ENCODE measurements at regions of chr6 and their contacts with region 1.

Region 1: GRCh38 chr6:43395776-43396175 is 26.3 kb upstream of the ZNF318 start:
- DNase-seq: no peak
- ATAC-seq: no peak
- H3K4me3 ChIP-seq: no peak overlapping the region
- H3K4me3 Mint-ChIP-seq: no peak overlapping the region
- H3K27ac ChIP-seq: no peak overlapping the region
- H3K27ac Mint-ChIP-seq: peak overlapping the region; percentile 57
- H3K4me1 ChIP-seq: peaks cover 19% of the 10 kb centered on the region
- H3K4me1 Mint-ChIP-seq: peaks cover 36% of the 10 kb centered on the region
- H3K27me3 ChIP-seq: peaks cover 0 to 3% of the 10 kb centered on the region in 2 experiments
- H3K27me3 Mint-ChIP-seq: peaks cover 2% of the 10 kb centered on the region
- CTCF ChIP-seq: no peak

Region 2: DNA sequence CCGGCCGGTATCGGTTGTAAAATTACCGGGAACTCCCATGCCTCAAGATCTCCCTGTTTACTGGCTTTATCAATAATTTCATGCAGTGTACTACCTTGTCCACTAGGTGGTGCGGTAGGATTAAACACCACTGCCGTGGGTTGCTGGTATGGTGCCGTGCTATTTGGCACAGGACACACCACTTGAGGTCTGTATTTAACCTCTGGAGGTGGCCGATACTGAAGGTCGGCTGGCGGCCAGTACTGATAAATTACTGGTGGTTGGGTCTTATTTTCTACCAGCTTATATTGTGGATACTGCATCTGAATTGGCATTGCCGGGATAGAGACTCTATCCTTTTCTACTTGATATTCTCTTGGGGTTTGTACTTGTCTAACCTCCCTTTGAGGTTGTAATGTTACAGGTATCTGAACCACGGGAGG is 494.2 kb before region 1 on chr6:
- CTCF ChIA-PET with region 1: interaction called, 3 read pairs
- POLR2A ChIA-PET with region 1: no interaction called
- intact Hi-C with region 1: loop called in 1 of 2 experiments (anchors 5 kb)
- DNase-seq: peak; percentile 32 to 89 (median 67)
- ATAC-seq: peak; percentile 100
- H3K4me3 ChIP-seq: no peak overlapping the region
- H3K4me3 Mint-ChIP-seq: peak overlapping the region; percentile 63
- H3K27ac ChIP-seq: no peak overlapping the region
- H3K27ac Mint-ChIP-seq: no peak overlapping the region
- H3K4me1 ChIP-seq: peaks cover 6% of the 10 kb centered on the region
- H3K4me1 Mint-ChIP-seq: peaks cover 17% of the 10 kb centered on the region
- H3K27me3 ChIP-seq: no peaks in the 10 kb centered on the region
- H3K27me3 Mint-ChIP-seq: no peaks in the 10 kb centered on the region
- CTCF ChIP-seq: peak; percentile 92

Region 3: DNA sequence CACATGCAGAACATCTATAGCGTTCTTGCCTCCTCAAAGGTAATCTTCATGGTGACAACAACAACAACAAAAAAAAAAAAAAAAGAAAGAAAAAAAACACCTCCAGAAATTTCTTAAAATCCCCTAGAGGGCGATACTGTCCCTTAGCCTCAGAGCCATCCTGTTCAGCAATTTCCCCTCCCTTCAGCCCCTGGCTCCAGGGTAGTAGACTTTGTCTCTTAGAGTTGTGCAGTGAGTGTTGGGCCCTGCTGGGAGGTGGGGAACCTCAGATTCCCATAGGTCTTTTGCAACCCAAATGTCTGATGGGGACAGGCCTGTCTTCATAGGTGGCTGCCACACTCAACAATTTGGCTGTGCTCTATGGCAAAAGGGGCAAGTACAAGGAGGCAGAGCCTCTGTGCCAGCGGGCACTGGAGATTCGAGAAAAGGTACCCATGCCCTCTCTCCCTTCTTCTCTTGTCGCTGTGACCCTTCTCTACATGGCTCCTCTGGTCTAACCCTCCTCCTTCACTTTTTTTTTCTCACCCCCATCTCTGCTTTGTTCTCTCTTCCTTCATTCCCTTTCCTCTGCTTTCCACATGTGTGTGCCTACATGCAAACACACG is 325.6 kb before region 1 on chr6:
- CTCF ChIA-PET with region 1: no interaction called
- POLR2A ChIA-PET with region 1: no interaction called
- intact Hi-C with region 1: no loop called
- DNase-seq: peak in 2 of 9 experiments; percentile 55 to 72
- ATAC-seq: peak; percentile 78
- H3K4me3 ChIP-seq: no peak overlapping the region
- H3K4me3 Mint-ChIP-seq: no peak overlapping the region
- H3K27ac ChIP-seq: no peak overlapping the region
- H3K27ac Mint-ChIP-seq: no peak overlapping the region
- H3K4me1 ChIP-seq: no peaks in the 10 kb centered on the region
- H3K4me1 Mint-ChIP-seq: peaks cover 2% of the 10 kb centered on the region
- H3K27me3 ChIP-seq: no peaks in the 10 kb centered on the region
- H3K27me3 Mint-ChIP-seq: no peaks in the 10 kb centered on the region
- CTCF ChIP-seq: peak; percentile 62

Region 4: GRCh38 chr6:43228951-43229802 is 166.6 kb before region 1 on chr6 and contains the start of gene DNPH1:
- CTCF ChIA-PET with region 1: interaction called, 16 read pairs
- POLR2A ChIA-PET with region 1: no interaction called
- intact Hi-C with region 1: no loop called
- DNase-seq: peak; percentile 62 to 90 (median 79)
- ATAC-seq: peak; percentile 62
- H3K4me3 ChIP-seq: peak within 1 kb of the TSS; percentile 48 to 69
- H3K4me3 Mint-ChIP-seq: peak within 1 kb of the TSS; percentile 87
- H3K27ac ChIP-seq: peak within 1 kb of the TSS; percentile 49 to 60
- H3K27ac Mint-ChIP-seq: peak within 1 kb of the TSS; percentile 94
- H3K4me1 ChIP-seq: peaks cover 43% of the 10 kb centered on the region
- H3K4me1 Mint-ChIP-seq: peaks cover 40% of the 10 kb centered on the region
- H3K27me3 ChIP-seq: no peaks in the 10 kb centered on the region
- H3K27me3 Mint-ChIP-seq: no peaks in the 10 kb centered on the region
- CTCF ChIP-seq: peak; percentile 92
- total RNA-seq, gene DNPH1: 19.6 to 26.8 TPM

Region 5: DNA sequence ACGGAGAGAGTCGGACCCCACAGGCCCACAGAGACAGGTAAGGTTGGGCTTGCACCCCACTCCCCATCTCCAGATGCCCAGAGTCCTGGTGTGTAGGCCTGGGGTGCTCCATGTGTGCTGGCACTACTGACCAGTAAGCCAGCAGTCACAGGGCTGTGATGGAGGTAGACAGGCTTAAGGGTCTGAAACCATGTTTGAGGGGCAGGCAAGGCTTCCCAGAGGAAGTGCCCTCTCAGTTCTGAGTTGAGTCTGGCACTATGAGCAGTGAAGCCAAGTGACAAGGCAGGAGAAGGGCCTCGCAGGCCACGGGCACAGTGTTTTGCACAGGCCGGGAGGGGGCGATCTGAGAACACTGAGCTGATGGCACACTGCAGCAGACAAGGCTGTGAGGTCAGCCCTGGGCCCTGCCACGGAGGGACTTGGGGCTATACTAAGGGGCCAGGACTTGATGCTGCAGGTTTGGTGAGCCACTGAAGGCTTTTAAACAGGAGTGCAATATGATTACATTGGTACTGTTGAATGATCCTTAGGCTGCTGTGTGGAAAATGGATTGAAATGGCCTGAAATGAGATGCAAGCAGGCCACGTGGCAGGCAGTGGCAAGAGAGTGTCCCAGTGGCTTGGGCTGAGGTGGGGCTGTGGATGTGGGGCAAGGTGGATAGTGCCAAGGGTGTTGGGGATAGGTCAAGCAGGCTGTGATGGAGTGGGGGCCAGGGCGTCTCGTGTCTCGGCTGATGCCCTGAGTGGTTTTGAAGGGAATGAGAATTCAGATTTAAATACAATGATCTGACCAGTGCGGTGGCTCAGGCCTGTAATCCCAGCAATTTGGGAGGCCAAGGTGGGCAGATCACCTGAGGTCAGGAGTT is 132.2 kb before region 1 on chr6:
- CTCF ChIA-PET with region 1: interaction called, 52 read pairs
- POLR2A ChIA-PET with region 1: no interaction called
- intact Hi-C with region 1: loop called in 1 of 2 experiments (anchors 1 kb)
- DNase-seq: peak; percentile 57 to 84 (median 75)
- ATAC-seq: peak; percentile 95
- H3K4me3 ChIP-seq: no peak overlapping the region
- H3K4me3 Mint-ChIP-seq: no peak overlapping the region
- H3K27ac ChIP-seq: no peak overlapping the region
- H3K27ac Mint-ChIP-seq: no peak overlapping the region
- H3K4me1 ChIP-seq: no peaks in the 10 kb centered on the region
- H3K4me1 Mint-ChIP-seq: no peaks in the 10 kb centered on the region
- H3K27me3 ChIP-seq: no peaks in the 10 kb centered on the region
- H3K27me3 Mint-ChIP-seq: peaks cover 3% of the 10 kb centered on the region
- CTCF ChIP-seq: peak; percentile 57

Region 6: DNA sequence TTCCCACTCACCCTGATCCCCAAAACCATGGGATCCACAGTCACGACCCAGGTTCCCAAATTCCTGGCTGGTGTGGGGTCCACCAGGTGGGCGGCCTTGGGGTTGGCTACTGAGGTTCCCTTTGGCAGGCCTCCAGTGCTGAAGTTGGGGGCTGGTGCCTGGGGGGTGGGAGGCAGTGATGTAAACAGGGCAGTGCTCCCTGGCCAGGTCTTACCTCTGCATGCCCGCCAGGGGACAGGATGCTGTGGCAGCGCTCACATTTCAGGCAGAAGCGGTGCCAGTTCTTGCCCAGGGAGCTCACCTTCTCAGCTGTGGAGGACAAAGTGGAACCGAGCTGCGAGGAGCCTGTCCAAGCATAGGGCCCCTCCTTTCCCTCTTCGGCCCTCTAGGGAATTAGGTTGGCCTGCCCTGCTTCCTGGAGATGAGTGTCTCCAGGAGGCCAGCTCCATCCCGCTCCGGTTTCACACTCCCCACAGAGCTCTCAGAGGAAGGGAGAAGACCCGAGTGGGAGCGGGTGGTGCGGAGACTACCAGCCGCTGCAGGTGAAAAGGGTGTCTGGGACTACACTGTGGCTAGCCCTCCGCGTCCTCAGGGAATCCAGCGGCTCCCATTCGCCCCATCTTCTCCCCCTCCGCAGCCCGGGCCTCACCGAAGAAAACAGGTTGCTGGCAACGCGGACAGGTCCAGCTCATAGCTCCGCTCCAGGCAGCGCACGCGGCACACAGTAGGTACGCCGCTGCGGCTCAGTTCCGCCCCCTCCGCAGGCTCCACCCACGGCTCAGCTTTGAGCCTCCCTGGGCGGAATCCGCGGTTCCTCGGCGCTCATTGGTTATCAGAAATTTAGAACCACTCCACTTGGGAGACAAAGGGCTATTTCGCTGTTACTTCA is 87.4 kb before region 1 on chr6 and contains the start of gene CRIP3:
- CTCF ChIA-PET with region 1: interaction called, 24 read pairs
- POLR2A ChIA-PET with region 1: interaction called, 3 read pairs
- intact Hi-C with region 1: loop called (anchors 1 kb)
- DNase-seq: peak in 8 of 9 experiments; percentile 21 to 68 (median 50)
- ATAC-seq: peak; percentile 86
- H3K4me3 ChIP-seq: peak within 1 kb of the TSS; percentile 36 to 48
- H3K4me3 Mint-ChIP-seq: peak within 1 kb of the TSS; percentile 77
- H3K27ac ChIP-seq: no peak within 1 kb of the TSS
- H3K27ac Mint-ChIP-seq: no peak within 1 kb of the TSS
- H3K4me1 ChIP-seq: peaks cover 12% of the 10 kb centered on the region
- H3K4me1 Mint-ChIP-seq: peaks cover 9% of the 10 kb centered on the region
- H3K27me3 ChIP-seq: no peaks in the 10 kb centered on the region
- H3K27me3 Mint-ChIP-seq: peaks cover 5% of the 10 kb centered on the region
- CTCF ChIP-seq: peak; percentile 41
- total RNA-seq, gene CRIP3: 0.64 to 0.84 TPM

Region 7: GRCh38 chr6:43355862-43356590 is 39.8 kb before region 1 on chr6:
- CTCF ChIA-PET with region 1: interaction called, 47 read pairs
- POLR2A ChIA-PET with region 1: no interaction called
- intact Hi-C with region 1: loop called (anchors 1 to 2 kb)
- DNase-seq: no peak
- ATAC-seq: peak; percentile 34
- H3K4me3 ChIP-seq: no peak overlapping the region
- H3K4me3 Mint-ChIP-seq: no peak overlapping the region
- H3K27ac ChIP-seq: no peak overlapping the region
- H3K27ac Mint-ChIP-seq: no peak overlapping the region
- H3K4me1 ChIP-seq: no peaks in the 10 kb centered on the region
- H3K4me1 Mint-ChIP-seq: peaks cover 3% of the 10 kb centered on the region
- H3K27me3 ChIP-seq: no peaks in the 10 kb centered on the region
- H3K27me3 Mint-ChIP-seq: no peaks in the 10 kb centered on the region
- CTCF ChIP-seq: no peak

Region 8: DNA sequence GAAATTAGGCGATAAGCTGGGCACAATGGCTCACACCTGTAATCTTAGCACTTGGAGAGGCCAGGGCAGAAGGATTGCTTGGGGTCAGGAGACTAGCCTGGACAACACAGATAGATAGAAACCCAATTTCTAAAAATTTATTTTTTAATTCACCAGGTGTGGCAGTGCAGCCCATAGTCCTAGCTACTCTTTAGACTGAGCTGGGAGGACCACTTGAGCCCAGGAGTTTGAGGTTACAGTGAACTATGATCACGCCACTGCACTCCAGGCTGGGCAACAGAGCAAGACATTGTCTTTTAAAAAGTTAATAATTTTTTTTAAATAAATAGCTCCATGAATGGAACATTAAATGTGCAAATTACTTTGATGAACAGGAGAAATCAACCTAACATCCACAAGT is 34.5 kb before region 1 on chr6:
- CTCF ChIA-PET with region 1: interaction called, 47 read pairs
- POLR2A ChIA-PET with region 1: no interaction called
- intact Hi-C with region 1: loop called (anchors 1 to 2 kb)
- DNase-seq: peak in 1 of 9 experiments; percentile 30
- ATAC-seq: peak; percentile 48
- H3K4me3 ChIP-seq: no peak overlapping the region
- H3K4me3 Mint-ChIP-seq: no peak overlapping the region
- H3K27ac ChIP-seq: no peak overlapping the region
- H3K27ac Mint-ChIP-seq: no peak overlapping the region
- H3K4me1 ChIP-seq: peaks cover 3% of the 10 kb centered on the region
- H3K4me1 Mint-ChIP-seq: peaks cover 30% of the 10 kb centered on the region
- H3K27me3 ChIP-seq: no peaks in the 10 kb centered on the region
- H3K27me3 Mint-ChIP-seq: no peaks in the 10 kb centered on the region
- CTCF ChIP-seq: no peak

Region 9: GRCh38 chr6:43629505-43630300 is 233.9 kb after region 1 on chr6:
- CTCF ChIA-PET with region 1: no interaction called
- POLR2A ChIA-PET with region 1: no interaction called
- intact Hi-C with region 1: no loop called
- DNase-seq: peak; percentile 66 to 96 (median 84)
- ATAC-seq: peak; percentile 51
- H3K4me3 ChIP-seq: peak overlapping the region; percentile 77 to 82
- H3K4me3 Mint-ChIP-seq: peak overlapping the region; percentile 98
- H3K27ac ChIP-seq: peak overlapping the region; percentile 53 to 75
- H3K27ac Mint-ChIP-seq: peak overlapping the region; percentile 95
- H3K4me1 ChIP-seq: peaks cover 15% of the 10 kb centered on the region
- H3K4me1 Mint-ChIP-seq: peaks cover 39% of the 10 kb centered on the region
- H3K27me3 ChIP-seq: no peaks in the 10 kb centered on the region
- H3K27me3 Mint-ChIP-seq: no peaks in the 10 kb centered on the region
- CTCF ChIP-seq: no peak

Region 10: DNA sequence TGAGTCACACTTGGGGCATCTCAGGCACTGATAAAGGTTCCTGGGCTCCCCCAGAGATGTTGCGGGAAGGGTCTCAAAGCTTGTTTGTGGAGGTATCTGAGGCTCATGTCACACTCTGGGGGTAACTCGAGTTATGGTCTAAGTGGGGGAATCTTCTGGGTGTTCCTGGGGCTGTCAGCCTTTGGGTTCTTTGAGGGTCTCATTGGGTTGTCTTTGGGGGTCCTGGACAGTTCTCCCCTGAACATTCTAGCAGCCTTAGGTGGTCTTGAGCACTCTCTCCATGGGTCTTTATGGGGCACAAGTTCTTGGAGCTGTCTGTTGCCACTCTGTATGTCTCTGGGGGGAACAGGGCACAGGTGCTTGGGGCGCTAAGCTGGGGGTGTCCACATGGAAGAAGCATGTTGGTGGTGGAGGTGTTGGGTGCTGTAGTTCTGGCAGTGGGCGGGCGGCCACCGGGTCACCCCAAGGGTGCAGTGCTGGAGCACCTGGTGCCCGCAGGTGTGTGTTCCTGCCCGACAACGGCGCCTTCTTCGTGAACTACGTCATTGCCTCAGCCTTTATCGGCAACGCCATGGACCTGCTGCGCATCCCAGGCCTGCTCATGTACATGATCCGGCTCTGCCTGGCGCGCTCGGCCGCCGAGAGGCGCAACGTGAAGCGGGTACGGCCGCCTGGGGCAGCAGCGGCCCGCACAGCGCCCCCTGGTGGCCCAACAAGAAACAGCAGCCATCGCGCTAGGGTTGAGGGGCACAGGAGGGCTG is 755.8 kb after region 1 on chr6:
- CTCF ChIA-PET with region 1: no interaction called
- POLR2A ChIA-PET with region 1: no interaction called
- intact Hi-C with region 1: no loop called
- DNase-seq: peak; percentile 63 to 88 (median 80)
- ATAC-seq: peak; percentile 93
- H3K4me3 ChIP-seq: peak overlapping the region in 1 of 2 experiments; percentile 20
- H3K4me3 Mint-ChIP-seq: no peak overlapping the region
- H3K27ac ChIP-seq: no peak overlapping the region
- H3K27ac Mint-ChIP-seq: no peak overlapping the region
- H3K4me1 ChIP-seq: peaks cover 8% of the 10 kb centered on the region
- H3K4me1 Mint-ChIP-seq: peaks cover 2% of the 10 kb centered on the region
- H3K27me3 ChIP-seq: no peaks in the 10 kb centered on the region
- H3K27me3 Mint-ChIP-seq: no peaks in the 10 kb centered on the region
- CTCF ChIP-seq: peak; percentile 99

Region 11: GRCh38 chr6:45156075-45156474 is 1760.3 kb after region 1 on chr6:
- CTCF ChIA-PET with region 1: no interaction called
- POLR2A ChIA-PET with region 1: no interaction called
- intact Hi-C with region 1: no loop called
- DNase-seq: peak in 3 of 9 experiments; percentile 21 to 75 (median 55)
- ATAC-seq: peak; percentile 97
- H3K4me3 ChIP-seq: no peak overlapping the region
- H3K4me3 Mint-ChIP-seq: peak overlapping the region; percentile 6
- H3K27ac ChIP-seq: peak overlapping the region in 1 of 2 experiments; percentile 35
- H3K27ac Mint-ChIP-seq: peak overlapping the region; percentile 81
- H3K4me1 ChIP-seq: peaks cover 24% of the 10 kb centered on the region
- H3K4me1 Mint-ChIP-seq: peaks cover 35% of the 10 kb centered on the region
- H3K27me3 ChIP-seq: no peaks in the 10 kb centered on the region
- H3K27me3 Mint-ChIP-seq: no peaks in the 10 kb centered on the region
- CTCF ChIP-seq: no peak